ENCODE measurements at regions of chr3 and their contacts with region 1.

Region 1: DNA sequence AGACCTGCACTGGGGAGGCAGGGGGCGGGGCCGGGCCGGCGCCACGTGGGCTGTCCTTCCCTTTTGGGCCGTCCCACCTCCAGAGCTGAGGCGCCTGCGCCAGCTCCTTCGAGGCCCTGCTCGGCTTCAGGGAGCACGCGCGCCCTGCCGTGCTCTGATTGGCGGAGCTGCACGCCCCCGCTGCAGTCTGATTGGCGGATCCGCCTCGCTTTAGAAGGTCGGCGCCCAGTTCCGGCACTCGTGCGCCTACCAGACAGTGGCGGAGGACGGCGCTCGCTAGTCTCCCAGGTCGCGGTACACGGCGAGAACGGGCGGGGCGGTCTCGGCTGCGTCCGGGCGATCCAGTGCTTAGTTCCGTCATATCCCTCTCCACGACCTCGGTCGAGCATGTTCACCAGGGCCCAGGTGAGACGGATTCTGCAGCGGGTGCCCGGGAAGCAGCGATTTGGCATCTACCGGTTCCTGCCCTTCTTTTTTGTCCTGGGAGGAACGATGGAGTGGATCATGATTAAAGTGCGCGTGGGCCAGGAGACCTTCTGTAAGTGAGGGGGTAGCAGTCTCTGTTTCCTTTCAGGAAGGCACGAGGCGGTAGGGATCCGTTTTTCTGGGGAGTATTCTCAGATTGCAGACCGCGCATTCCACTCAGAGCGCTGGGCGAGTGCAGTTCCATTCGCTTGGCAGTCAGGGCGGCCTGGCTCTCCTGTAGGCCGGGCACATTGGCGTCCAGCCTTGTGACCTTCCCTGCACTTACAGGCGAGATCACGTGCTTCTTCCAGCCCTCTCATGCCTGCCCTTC is at the start of gene UQCC5:
- DNase-seq: peak; percentile 98
- H3K4me3 ChIP-seq: peak within 1 kb of the TSS; percentile 52 to 55
- H3K27ac ChIP-seq: peak within 1 kb of the TSS; percentile 58 to 80
- H3K4me1 ChIP-seq: peaks cover 23% of the 10 kb centered on the region
- H3K27me3 ChIP-seq: no peaks in the 10 kb centered on the region
- CTCF ChIP-seq: peak in 2 of 4 experiments; percentile 10 to 41
- POLR2A ChIP-seq: peak; percentile 99
- total RNA-seq, gene UQCC5: 3.0 to 16.5 TPM

Region 2: GRCh38 chr3:51173518-51174271 is 1362.9 kb before region 1 on chr3:
- intact Hi-C with region 1: no loop called
- DNase-seq: no peak
- H3K4me3 ChIP-seq: no peak overlapping the region
- H3K27ac ChIP-seq: no peak overlapping the region
- H3K4me1 ChIP-seq: no peaks in the 10 kb centered on the region
- H3K27me3 ChIP-seq: no peaks in the 10 kb centered on the region
- CTCF ChIP-seq: no peak
- POLR2A ChIP-seq: no peak

Region 3: GRCh38 chr3:52471371-52472238 is 65.0 kb before region 1 on chr3:
- intact Hi-C with region 1: loop called (anchors 2 kb)
- DNase-seq: peak; percentile 67
- H3K4me3 ChIP-seq: no peak overlapping the region
- H3K27ac ChIP-seq: peak overlapping the region; percentile 45 to 82
- H3K4me1 ChIP-seq: peaks cover 31% of the 10 kb centered on the region
- H3K27me3 ChIP-seq: no peaks in the 10 kb centered on the region
- CTCF ChIP-seq: peak; percentile 68 to 80 (median 74)
- POLR2A ChIP-seq: no peak

Region 4: GRCh38 chr3:52481819-52482521 is 54.6 kb before region 1 on chr3:
- intact Hi-C with region 1: loop called (anchors 5 kb)
- DNase-seq: no peak
- H3K4me3 ChIP-seq: no peak overlapping the region
- H3K27ac ChIP-seq: peak overlapping the region; percentile 31 to 72
- H3K4me1 ChIP-seq: no peaks in the 10 kb centered on the region
- H3K27me3 ChIP-seq: no peaks in the 10 kb centered on the region
- CTCF ChIP-seq: peak in 3 of 4 experiments; percentile 15 to 23 (median 22)
- POLR2A ChIP-seq: no peak

Region 5: GRCh38 chr3:52685709-52686691 is 149.4 kb after region 1 on chr3 and contains the starts of genes GNL3 and PBRM1:
- intact Hi-C with region 1: loop called (anchors 10 kb)
- DNase-seq: peak; percentile 92
- H3K4me3 ChIP-seq: peak within 1 kb of the TSS; percentile 64 to 86
- H3K27ac ChIP-seq: peak within 1 kb of the TSS; percentile 93 to 99
- H3K4me1 ChIP-seq: peaks cover 3% of the 10 kb centered on the region
- H3K27me3 ChIP-seq: no peaks in the 10 kb centered on the region
- CTCF ChIP-seq: no peak
- POLR2A ChIP-seq: peak; percentile 89
- total RNA-seq, gene GNL3: 50.7 to 116 TPM
- total RNA-seq, gene PBRM1: 72.5 to 77.5 TPM

Region 6: DNA sequence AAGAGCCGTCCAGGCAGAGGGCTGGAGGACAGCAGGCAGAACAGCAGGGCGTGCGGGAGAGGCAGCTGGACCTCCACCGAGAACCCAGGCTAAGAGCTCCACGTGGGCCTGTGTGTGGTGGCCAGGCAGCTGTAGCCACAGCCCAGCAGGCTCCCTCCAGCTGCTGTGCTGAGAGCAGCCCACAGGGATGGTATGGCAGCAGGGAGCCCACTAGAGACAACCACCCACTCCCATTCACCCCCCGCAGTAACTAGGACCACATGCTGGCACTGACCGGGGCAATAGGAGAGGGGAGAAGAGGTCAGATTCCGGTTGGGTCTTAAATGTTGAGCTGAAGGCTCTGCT is 323.8 kb after region 1 on chr3:
- intact Hi-C with region 1: no loop called
- DNase-seq: no peak
- H3K4me3 ChIP-seq: no peak overlapping the region
- H3K27ac ChIP-seq: no peak overlapping the region
- H3K4me1 ChIP-seq: no peaks in the 10 kb centered on the region
- H3K27me3 ChIP-seq: no peaks in the 10 kb centered on the region
- CTCF ChIP-seq: no peak
- POLR2A ChIP-seq: no peak

Measured in prostate gland (tissue), 2 donors.